Heart left ventricle (tissue), 16 donors: ENCODE measurements at regions of chr5 and their contacts with region 1.

Region 1: DNA sequence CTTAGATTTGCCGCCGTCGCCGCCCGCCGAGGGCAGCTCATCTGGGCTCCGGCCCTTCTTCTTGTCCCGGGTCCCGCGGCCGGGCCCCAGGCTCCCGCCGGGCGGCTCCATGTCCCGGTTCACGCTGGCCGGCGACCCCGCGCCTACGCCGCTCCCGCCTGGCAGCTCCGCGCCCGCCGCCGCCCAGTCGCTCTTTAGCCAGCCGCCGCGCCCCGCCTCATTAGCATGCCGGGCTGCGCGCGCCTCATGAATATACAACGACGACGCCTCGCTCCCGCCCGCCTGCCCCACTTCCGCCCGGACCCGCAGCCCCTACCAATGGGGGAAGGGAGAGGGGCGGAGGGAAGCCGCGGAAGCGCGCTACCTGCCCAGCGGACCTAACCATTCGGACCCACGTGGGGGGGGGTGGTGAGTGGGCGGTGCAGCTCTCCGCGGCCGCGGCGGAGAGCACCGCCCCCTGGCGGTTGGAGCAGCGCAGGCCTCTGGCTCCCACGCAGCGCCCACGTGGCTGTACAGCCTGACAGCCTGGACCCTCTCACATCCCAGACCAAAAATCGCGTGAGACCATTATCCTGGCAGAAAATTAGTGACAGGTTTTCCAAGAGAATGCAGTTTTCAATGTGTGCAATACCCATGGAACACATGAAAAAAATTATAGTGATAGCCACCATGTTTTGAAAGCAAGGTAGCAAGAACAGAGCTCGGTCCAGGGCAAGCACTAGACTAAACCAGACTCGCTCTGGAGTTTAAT is at the start of gene DIAPH1:
- DNase-seq: peak; percentile 97 to 98 (median 98)
- ATAC-seq: peak; percentile 95 to 98 (median 96)
- H3K4me3 ChIP-seq: peak within 1 kb of the TSS; percentile 73 to 99 (median 96)
- H3K27ac ChIP-seq: peak within 1 kb of the TSS; percentile 75 to 99 (median 96)
- H3K4me1 ChIP-seq: peaks cover 0 to 64% (median 26%) of the 10 kb centered on the region in 12 donors
- H3K27me3 ChIP-seq: no peaks in the 10 kb centered on the region
- CTCF ChIP-seq: peak; percentile 95 to 99 (median 98)
- POLR2A ChIP-seq: peak; percentile 87 to 98
- total RNA-seq, gene DIAPH1: 38.8 to 137 (median 61.5) TPM

Region 2: DNA sequence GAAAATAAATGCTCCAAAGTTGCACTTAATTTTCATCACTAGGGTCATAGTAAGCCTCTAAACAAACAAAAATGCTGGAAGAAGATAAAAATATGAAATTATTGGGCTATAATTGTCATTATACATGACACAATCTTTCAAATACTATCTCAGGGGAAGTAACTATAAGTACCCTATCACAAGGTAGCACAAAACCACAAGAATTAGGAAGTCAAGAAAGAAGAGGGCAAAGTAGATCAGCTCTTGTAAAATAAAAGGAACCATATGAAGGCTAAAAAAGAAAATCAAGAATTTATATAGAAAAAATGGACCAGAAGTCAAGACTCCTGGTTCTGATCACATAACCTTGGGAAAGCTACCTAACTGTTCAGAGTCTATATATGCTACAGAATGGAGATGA is 48.3 kb before region 1 on chr5:
- intact Hi-C with region 1: loop called in 1 of 10 experiments (anchors 10 kb)
- DNase-seq: no peak
- ATAC-seq: no peak
- H3K4me3 ChIP-seq: no peak overlapping the region
- H3K27ac ChIP-seq: no peak overlapping the region
- H3K4me1 ChIP-seq: peaks cover 0 to 17% (median 0%) of the 10 kb centered on the region in 12 donors
- H3K27me3 ChIP-seq: no peaks in the 10 kb centered on the region
- CTCF ChIP-seq: no peak
- POLR2A ChIP-seq: no peak

Region 3: DNA sequence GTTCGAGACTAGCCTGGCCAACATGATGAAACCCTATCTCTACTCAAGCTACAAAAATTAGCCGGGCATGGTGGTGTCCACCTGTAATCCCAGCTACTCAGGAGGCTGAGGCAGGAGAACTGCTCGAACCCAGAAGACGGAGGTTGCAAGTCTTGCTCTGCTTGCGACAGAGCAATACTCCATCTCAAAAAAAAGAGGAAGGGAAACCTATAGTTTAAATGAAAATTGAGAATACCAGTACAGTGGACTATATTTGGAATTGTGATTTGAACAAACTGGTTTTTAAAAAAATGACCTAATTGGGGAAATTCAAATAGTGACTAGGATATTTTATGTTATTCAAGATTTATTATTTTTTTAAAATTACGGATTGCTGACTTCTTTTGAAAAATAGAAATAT is 33.4 kb before region 1 on chr5:
- intact Hi-C with region 1: loop called in 1 of 10 experiments (anchors 5 kb)
- DNase-seq: no peak
- ATAC-seq: no peak
- H3K4me3 ChIP-seq: no peak overlapping the region
- H3K27ac ChIP-seq: no peak overlapping the region
- H3K4me1 ChIP-seq: peaks cover 0 to 26% (median 1%) of the 10 kb centered on the region in 12 donors
- H3K27me3 ChIP-seq: no peaks in the 10 kb centered on the region
- CTCF ChIP-seq: no peak
- POLR2A ChIP-seq: no peak

Region 4: GRCh38 chr5:141598391-141599350 is 20.3 kb before region 1 on chr5:
- intact Hi-C with region 1: loop called in 5 of 10 experiments (anchors 1 to 2 kb)
- DNase-seq: no peak
- ATAC-seq: peak; percentile 90 to 92 (median 91)
- H3K4me3 ChIP-seq: no peak overlapping the region
- H3K27ac ChIP-seq: peak overlapping the region; percentile 41 to 91 (median 80)
- H3K4me1 ChIP-seq: peaks cover 0 to 60% (median 31%) of the 10 kb centered on the region in 12 donors
- H3K27me3 ChIP-seq: no peaks in the 10 kb centered on the region
- CTCF ChIP-seq: no peak
- POLR2A ChIP-seq: no peak

Region 5: GRCh38 chr5:141605523-141606277 is 13.3 kb before region 1 on chr5:
- intact Hi-C with region 1: loop called in 2 of 10 experiments (anchors 2 kb)
- DNase-seq: peak in 4 of 5 donors; percentile 46 to 64 (median 62)
- ATAC-seq: peak; percentile 70 to 88 (median 79)
- H3K4me3 ChIP-seq: peak overlapping the region in 1 of 12 donors; percentile 25
- H3K27ac ChIP-seq: peak overlapping the region in 11 of 12 donors; percentile 48 to 92 (median 67)
- H3K4me1 ChIP-seq: peaks cover 0 to 84% (median 40%) of the 10 kb centered on the region in 12 donors
- H3K27me3 ChIP-seq: no peaks in the 10 kb centered on the region
- CTCF ChIP-seq: no peak
- POLR2A ChIP-seq: peak in 1 of 2 donors; percentile 18